ENCODE measurements at regions of chr21 and their contacts with region 1.

Region 1: DNA sequence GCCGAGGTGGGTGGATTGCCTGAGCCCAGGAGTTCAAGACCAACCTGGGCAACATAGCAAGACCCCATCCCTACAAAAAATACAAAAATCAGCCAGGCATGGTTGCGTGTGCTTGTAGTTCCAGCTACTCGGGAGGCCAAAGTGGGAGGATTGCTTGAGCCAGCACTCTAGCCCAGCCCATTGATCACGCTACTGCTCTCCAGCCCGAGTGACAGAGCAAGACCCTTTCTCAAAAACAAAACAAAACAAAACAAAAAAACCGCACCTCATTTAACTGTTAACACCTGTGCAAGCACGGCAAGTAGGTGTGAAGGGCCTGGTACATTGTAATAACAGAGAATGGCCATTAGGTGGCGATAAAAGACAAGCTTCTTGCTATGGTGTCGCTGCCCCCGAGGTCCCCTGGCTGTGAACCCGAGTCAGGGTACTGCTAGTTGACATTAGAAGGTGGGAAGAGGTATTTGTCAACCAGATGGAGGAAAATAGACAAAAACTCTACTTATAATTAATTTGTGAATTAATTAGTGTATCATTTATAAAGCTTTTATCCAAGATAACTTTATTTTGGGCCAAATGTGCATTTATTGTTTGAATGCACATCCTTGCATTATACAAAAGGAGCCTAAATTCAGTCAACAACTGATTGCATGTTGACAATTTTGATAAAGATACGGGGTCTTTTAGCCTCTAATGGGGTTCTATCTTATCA is 66.5 kb downstream of the SH3BGR start:
- DNase-seq: no peak
- H3K4me3 ChIP-seq: no peak overlapping the region
- H3K27me3 ChIP-seq: no peaks in the 10 kb centered on the region
- CTCF ChIP-seq: peak; percentile 76

Region 2: DNA sequence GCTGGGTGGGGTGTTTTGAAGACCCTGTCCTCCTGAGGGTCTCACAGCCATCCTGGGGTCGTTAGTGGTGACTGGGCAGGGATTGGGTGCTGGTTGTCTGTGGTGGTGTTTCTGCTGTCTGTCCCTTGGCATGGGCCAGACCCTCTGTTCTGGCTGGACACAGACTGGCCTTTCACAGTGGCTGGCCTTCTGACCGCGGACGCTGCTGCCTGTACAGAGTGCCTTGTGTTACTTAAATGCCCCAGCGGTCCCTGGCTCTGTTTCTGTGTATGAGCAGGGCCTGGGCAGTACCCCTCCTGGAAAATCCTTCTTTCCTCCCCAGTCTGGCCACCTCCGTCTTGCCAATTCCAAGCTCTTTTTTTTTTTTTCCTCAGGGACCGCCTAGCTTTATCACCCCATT is 15.7 kb before region 1 on chr21:
- CTCF ChIA-PET with region 1: interaction called, 13 read pairs
- POLR2A ChIA-PET with region 1: no interaction called
- DNase-seq: no peak
- H3K4me3 ChIP-seq: no peak overlapping the region
- H3K27me3 ChIP-seq: no peaks in the 10 kb centered on the region
- CTCF ChIP-seq: no peak

Region 3: DNA sequence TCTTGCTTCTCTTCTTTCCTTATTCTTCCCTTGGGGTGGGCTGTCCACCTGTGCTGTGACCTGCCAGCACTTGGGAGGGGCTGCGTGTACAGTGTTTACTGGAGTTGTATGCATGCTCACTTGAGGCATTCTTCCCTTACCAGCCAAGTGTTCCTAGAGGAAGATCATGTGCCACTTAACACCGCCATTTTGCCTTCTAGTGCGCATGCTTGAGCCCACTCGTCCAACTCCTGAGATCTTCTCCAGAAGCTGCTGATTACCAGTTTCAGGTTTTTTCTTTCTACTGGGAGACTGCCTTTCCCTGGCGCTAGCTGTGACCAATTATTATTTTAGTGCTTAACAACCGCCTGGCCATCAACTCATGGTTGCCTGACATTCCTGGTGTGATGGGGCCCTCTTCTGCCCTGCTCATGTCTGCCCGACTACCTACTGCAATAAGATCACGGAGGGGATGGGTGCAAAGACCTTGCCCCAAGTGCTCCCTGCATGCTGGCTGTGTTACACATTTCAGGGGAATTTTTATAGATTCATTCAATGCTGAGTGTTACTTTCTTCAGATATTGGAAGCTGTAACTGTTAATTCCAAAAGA is 20.3 kb after region 1 on chr21:
- CTCF ChIA-PET with region 1: interaction called, 11 read pairs
- POLR2A ChIA-PET with region 1: no interaction called
- DNase-seq: no peak
- H3K4me3 ChIP-seq: no peak overlapping the region
- H3K27me3 ChIP-seq: no peaks in the 10 kb centered on the region
- CTCF ChIP-seq: no peak

Region 4: GRCh38 chr21:39715804-39716397 is 197.6 kb after region 1 on chr21:
- CTCF ChIA-PET with region 1: interaction called, 280 read pairs
- POLR2A ChIA-PET with region 1: no interaction called
- DNase-seq: no peak
- H3K4me3 ChIP-seq: no peak overlapping the region
- H3K27me3 ChIP-seq: no peaks in the 10 kb centered on the region
- CTCF ChIP-seq: peak; percentile 65

Region 5: GRCh38 chr21:39721885-39722284 is 203.6 kb after region 1 on chr21:
- CTCF ChIA-PET with region 1: interaction called, 280 read pairs
- POLR2A ChIA-PET with region 1: no interaction called
- DNase-seq: no peak
- H3K4me3 ChIP-seq: no peak overlapping the region
- H3K27me3 ChIP-seq: no peaks in the 10 kb centered on the region
- CTCF ChIP-seq: no peak